ENCODE measurements at regions of chr1 and their contacts with region 1.

Region 1: GRCh38 chr1:9455487-9456234 is 83.6 kb upstream of the SLC25A33 start:
- DNase-seq: peak; percentile 77

Region 2: DNA sequence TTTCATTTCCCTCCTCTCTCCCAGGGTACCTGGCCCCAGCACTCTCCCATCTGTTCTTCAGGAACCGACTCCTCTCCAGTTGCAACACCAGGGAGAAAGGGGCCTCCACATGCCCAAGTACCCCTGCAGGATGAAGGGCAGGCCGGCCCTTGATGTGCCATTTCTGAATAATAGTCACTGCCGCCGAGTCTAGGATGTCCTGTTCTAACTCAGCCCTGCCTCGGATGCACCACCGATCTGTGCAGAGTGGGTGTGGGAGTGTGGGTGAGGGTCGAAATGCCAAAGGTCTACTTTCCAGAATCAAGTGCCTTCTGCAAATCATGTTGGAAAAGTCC is 188.3 kb before region 1 on chr1:
- CTCF ChIA-PET with region 1: interaction called, 14 read pairs
- POLR2A ChIA-PET with region 1: no interaction called
- DNase-seq: no peak

Region 3: DNA sequence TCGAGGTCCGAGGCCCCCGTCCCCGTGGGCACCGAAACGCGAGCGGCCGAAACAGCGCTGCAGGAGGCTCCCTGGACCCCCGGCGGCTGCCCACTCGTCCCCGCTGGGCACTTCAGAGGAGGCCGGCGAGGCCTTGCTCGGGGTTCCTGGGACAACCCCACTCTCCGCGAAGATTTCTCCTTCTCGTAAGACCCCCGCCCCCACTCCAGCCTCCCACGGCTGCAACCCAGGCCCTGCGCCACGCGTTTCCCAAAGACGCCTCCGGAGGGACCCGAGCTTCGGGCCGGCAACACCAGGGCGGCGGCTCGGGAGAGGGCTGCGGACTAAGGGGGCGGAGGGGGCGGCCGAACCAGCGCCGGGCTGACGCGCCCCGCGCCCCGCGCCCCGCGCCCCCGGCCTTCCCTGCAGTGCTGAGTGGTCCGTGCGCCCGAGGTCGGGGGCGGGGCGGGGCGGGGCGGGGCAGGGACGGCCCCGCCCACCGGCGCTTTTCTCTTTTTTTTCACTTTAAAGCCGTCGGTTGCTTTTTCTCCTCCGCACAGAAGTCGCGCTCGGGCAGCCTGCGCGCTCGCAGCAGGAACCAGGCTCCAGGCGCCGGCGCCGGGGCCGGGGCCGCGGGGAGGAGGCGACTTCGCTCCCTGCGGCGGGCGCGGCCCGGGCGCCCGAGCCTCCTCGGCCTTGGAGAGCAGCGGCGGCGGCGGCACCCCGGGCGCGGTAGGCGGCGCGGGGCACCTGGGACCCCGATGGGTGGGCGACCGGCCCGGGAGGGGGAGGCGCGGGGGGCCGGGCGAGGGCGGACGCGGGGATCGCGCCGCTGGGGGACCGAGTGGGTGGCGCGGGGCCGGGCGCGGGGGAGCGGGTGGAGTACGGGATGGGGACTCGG is 163.1 kb before region 1 on chr1 and contains the start of gene SPSB1:
- CTCF ChIA-PET with region 1: interaction called, 27 read pairs
- POLR2A ChIA-PET with region 1: no interaction called
- DNase-seq: peak; percentile 80

Region 4: GRCh38 chr1:9705337-9706093 is 249.9 kb after region 1 on chr1:
- CTCF ChIA-PET with region 1: no interaction called
- POLR2A ChIA-PET with region 1: no interaction called
- DNase-seq: no peak